H1 (cell line): ENCODE measurements at regions of chr4 and their contacts with region 1.

Region 1: GRCh38 chr4:15396157-15396800 is 31.6 kb upstream of the C1QTNF7 start:
- DNase-seq: peak; percentile 9 to 80
- H3K4me3 ChIP-seq: no peak overlapping the region
- H3K27ac ChIP-seq: no peak overlapping the region
- H3K4me1 ChIP-seq: peaks cover 0 to 2% (median 0%) of the 10 kb centered on the region in 4 experiments; a peak in 1 of 7 replicates
- H3K27me3 ChIP-seq: no peaks in the 10 kb centered on the region
- CTCF ChIP-seq: peak; percentile 41 to 83 (median 82)
- EP300 ChIP-seq: no peak
- POLR2A ChIP-seq: no peak
- RAD21 ChIP-seq: peak; percentile 87 to 89

Region 2: GRCh38 chr4:15245006-15245530 is 151.2 kb before region 1 on chr4:
- CTCF ChIA-PET with region 1: interaction called, 88 read pairs
- POLR2A ChIA-PET with region 1: no interaction called
- DNase-seq: no peak
- H3K4me3 ChIP-seq: no peak overlapping the region
- H3K27ac ChIP-seq: no peak overlapping the region
- H3K4me1 ChIP-seq: no peaks in the 10 kb centered on the region
- H3K27me3 ChIP-seq: peaks cover 0 to 1% (median 0%) of the 10 kb centered on the region in 4 experiments; a peak in 1 of 7 replicates
- CTCF ChIP-seq: no peak
- EP300 ChIP-seq: no peak
- POLR2A ChIP-seq: no peak
- RAD21 ChIP-seq: no peak

Region 3: DNA sequence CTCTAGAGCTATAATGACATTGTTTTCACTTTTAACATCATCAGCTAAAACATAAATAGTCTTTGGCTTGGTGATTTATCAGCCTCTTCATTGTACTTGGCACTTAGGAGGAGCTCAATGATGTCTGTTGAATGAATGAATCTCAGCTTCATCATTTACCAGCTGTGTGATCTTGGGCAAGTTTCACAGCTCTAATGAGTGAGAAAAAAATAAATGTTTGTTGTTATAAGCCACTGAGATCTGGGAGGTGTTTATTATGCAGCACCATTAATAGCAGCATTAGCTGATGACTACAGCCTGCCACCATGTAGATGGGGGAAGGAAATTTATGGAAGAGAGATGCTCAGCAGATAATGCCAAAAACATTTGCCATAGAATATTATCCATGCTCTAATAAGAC is 32.1 kb before region 1 on chr4:
- CTCF ChIA-PET with region 1: interaction called, 14 read pairs
- POLR2A ChIA-PET with region 1: no interaction called
- DNase-seq: no peak
- H3K4me3 ChIP-seq: no peak overlapping the region
- H3K27ac ChIP-seq: no peak overlapping the region
- H3K4me1 ChIP-seq: no peaks in the 10 kb centered on the region
- H3K27me3 ChIP-seq: no peaks in the 10 kb centered on the region
- CTCF ChIP-seq: no peak
- EP300 ChIP-seq: no peak
- POLR2A ChIP-seq: no peak
- RAD21 ChIP-seq: no peak

Region 4: DNA sequence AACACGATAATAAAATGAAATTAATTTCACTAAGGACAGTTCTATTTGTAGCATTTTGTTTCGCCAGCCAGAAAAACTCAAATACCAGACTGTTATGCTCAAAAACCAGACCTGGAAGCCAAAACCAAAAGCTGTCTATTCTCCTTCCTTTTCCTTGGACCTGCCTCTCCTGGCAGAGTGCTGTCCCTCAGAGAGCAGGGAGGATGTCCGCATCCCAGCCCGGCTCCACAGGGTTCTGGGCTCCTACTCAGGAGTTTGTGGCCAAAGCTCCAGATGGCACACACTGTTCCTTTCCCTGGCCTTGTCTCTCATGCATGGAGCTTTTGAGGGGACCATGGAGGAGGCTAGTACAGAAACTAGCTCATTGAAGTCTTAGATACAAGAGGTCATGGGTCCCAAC is 10.4 kb before region 1 on chr4:
- CTCF ChIA-PET with region 1: interaction called, 42 read pairs
- POLR2A ChIA-PET with region 1: no interaction called
- DNase-seq: no peak
- H3K4me3 ChIP-seq: no peak overlapping the region
- H3K27ac ChIP-seq: no peak overlapping the region
- H3K4me1 ChIP-seq: peaks cover 0 to 4% (median 0%) of the 10 kb centered on the region in 4 experiments; a peak in 1 of 7 replicates
- H3K27me3 ChIP-seq: no peaks in the 10 kb centered on the region
- CTCF ChIP-seq: no peak
- EP300 ChIP-seq: no peak
- POLR2A ChIP-seq: no peak
- RAD21 ChIP-seq: no peak

Region 5: GRCh38 chr4:15423285-15423711 is 27.0 kb after region 1 on chr4:
- CTCF ChIA-PET with region 1: interaction called, 11 read pairs
- POLR2A ChIA-PET with region 1: no interaction called
- DNase-seq: no peak
- H3K4me3 ChIP-seq: no peak overlapping the region
- H3K27ac ChIP-seq: no peak overlapping the region
- H3K4me1 ChIP-seq: 0 out of 7 replicates have a peak, but pooled peaks cover 0 to 2% (median 0%) of the 10 kb centered on the region in 4 experiments
- H3K27me3 ChIP-seq: no peaks in the 10 kb centered on the region
- CTCF ChIP-seq: no peak
- EP300 ChIP-seq: no peak
- POLR2A ChIP-seq: no peak
- RAD21 ChIP-seq: no peak

Region 6: DNA sequence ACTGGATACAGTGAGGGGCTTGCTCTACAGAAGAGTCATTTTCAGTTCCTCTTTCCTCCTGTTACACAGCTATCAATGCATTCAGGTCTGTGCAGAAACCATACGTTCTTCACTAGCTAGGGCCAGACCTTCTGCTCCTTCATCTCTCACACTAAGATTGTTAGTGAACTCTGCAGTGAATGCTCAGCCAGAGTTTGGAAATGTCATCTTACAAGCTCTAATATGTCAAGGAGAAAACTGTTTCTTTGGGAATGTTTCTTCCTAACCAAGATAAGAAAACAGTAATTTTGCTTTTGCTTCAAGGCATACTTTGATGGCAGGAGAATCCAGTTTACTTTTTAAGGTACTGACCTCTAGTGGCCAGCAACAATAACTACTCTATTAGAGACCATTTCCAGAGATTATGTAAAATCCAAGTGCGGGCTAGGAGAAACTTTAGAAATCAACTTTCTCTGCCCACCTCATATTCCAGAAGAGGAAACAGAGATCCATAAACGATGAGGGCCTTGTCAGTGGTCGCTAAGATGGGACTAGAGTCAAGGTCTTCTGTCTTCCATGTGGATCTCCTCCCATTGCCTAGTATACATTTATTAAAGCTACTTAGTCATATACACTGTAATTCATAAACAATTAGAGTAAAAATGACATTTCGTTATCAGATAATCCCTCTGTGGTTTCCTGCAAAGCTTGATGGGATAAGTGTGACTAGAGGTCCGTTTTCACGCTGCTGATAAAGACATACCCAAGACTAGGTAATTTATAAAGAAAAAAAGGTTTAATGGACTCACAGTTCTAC is 61.3 kb after region 1 on chr4:
- CTCF ChIA-PET with region 1: interaction called, 21 read pairs
- POLR2A ChIA-PET with region 1: no interaction called
- DNase-seq: no peak
- H3K4me3 ChIP-seq: no peak overlapping the region
- H3K27ac ChIP-seq: no peak overlapping the region
- H3K4me1 ChIP-seq: no peaks in the 10 kb centered on the region
- H3K27me3 ChIP-seq: no peaks in the 10 kb centered on the region
- CTCF ChIP-seq: peak in 2 of 3 experiments; percentile 34 to 54; a peak in 2 of 4 replicates
- EP300 ChIP-seq: no peak
- POLR2A ChIP-seq: no peak
- RAD21 ChIP-seq: peak; percentile 77